ENCODE measurements at regions of chr4 and their contacts with region 1.

Region 1: DNA sequence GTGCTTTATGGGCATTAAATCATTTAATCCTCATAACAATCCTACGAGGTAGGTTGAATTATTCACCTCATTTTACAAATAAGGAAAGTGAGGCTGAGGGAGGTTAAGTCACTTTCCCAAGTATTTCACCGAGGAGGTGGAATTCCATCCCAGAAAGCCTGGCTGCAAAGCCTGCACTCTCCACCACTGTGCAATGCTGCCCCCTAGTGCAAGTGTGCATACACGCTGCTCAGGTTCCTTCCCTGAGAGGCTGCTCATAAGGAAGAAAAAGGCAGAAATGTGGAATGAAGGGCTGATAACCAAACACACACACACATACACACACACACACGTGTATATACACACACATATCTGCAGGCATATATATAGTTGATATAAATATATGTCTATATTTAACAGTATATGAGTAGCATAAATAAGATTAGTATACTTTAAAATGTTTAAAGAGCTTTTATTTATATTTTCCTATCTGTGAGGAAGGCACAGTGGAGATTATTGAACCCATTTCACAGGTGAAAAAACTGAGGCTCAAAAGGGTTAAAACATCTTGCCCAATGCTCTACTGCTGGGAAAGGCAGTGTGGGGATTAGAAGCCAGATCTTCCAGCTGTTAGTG is 714.5 kb upstream of the TENM3 start:
- DNase-seq: peak; percentile 81 to 91
- H3K4me3 ChIP-seq: no peak overlapping the region
- H3K4me1 ChIP-seq: peaks cover 3% of the 10 kb centered on the region
- H3K27me3 ChIP-seq: no peaks in the 10 kb centered on the region

Region 2: DNA sequence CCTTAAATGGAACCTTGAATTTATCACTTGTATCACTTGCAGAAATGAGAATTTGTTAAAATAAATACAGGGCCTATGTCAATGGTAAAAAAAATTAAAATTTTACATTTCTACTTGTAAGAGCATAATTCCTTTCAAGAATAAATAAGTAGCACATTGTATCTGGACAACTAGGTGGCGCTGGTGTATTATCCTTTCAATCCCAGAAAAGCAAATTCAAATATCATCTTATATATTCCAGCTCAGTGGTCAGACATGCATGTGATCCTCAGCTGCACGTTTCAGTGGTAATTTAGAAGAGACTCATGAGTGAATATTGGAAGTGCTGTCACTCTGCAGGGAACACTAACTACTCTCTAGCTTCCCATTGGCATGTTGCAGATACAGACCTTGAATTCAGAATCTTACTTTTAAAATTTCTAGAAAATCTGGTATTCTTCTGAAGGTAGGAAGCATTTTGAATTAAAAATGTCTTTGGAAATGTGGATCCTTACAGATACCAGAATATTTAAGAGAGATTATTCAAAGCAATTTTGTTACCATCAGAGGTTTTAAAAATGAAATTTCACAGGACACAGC is 700.1 kb before region 1 on chr4:
- in situ Hi-C with region 1: loop called (anchors 25 kb)
- DNase-seq: peak; percentile 74 to 84
- H3K4me3 ChIP-seq: no peak overlapping the region
- H3K4me1 ChIP-seq: peaks cover 25% of the 10 kb centered on the region
- H3K27me3 ChIP-seq: no peaks in the 10 kb centered on the region

Region 3: GRCh38 chr4:181143250-181143854 is 385.3 kb before region 1 on chr4:
- in situ Hi-C with region 1: loop called (anchors 5 kb)
- DNase-seq: peak; percentile 73 to 86
- H3K4me3 ChIP-seq: no peak overlapping the region
- H3K4me1 ChIP-seq: peaks cover 6% of the 10 kb centered on the region
- H3K27me3 ChIP-seq: peaks cover 5% of the 10 kb centered on the region; the same call in 1 of the 2 replicates

Region 4: GRCh38 chr4:181294421-181294820 is 234.3 kb before region 1 on chr4:
- in situ Hi-C with region 1: loop called (anchors 10 kb)
- DNase-seq: no peak
- H3K4me3 ChIP-seq: no peak overlapping the region
- H3K4me1 ChIP-seq: no peaks in the 10 kb centered on the region
- H3K27me3 ChIP-seq: 0 out of 2 replicates have a peak, but pooled peaks cover 3% of the 10 kb centered on the region

Measured in HAP-1 (cell line).